HCT116 (cell line): ENCODE measurements at regions of chr1 and their contacts with region 1.

Region 1: DNA sequence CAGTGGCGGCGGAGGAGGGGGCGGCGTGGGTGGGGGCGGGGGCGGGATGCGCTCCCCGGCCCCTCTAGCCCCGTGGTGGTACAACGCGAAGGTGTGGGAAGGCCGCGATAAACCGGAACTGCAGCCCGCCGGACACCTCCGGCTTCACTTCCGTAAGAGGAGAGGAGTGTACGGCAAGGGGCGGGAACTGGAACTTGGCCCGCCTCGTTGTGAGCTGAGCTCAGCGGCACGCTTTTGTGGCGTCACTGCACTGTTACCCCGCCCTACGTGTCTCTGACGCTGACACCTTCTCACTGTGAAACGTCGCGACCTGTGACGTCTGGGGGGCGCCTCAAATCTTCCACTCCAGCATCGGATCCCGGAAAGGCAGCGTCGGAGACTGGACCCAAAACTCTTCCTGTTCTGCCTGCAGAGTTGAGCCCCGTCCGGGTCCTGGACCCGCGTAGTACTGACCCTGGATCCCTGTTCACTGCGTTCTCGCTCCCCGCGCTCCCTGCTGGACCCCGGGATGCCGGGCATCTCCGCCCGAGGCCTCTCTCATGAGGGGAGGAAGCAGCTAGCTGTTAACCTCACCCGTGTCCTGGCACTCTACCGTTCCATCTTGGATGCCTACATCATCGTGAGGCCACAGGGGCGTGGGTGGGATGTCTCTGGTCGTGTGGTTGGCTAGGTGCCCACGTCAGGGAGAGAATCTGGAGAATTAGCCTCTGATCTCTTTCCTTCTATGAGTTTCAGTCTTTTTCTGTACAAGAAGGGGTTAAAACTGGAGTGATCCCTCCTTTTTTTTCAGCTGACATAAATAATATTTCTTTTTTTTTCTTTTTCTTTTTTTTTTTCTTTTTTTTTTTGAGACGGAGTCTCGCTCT is at the start of gene ISG20L2:
- DNase-seq: peak; percentile 97
- ATAC-seq: peak; percentile 85
- H3K4me3 ChIP-seq: peak within 1 kb of the TSS; percentile 92 to 93
- H3K27ac ChIP-seq: peak within 1 kb of the TSS; percentile 81
- H3K4me1 ChIP-seq: peaks cover 24 to 34% of the 10 kb centered on the region in 2 experiments
- H3K27me3 ChIP-seq: no peaks in the 10 kb centered on the region
- CTCF ChIP-seq: no peak
- POLR2A ChIP-seq: no peak
- RAD21 ChIP-seq: no peak
- total RNA-seq, gene ISG20L2: 41.7 TPM

Region 2: GRCh38 chr1:156659994-156660751 is 68.7 kb before region 1 on chr1:
- CTCF ChIA-PET with region 1: interaction called, 28 read pairs
- POLR2A ChIA-PET with region 1: interaction called, 9 read pairs
- RAD21 ChIA-PET with region 1: no interaction called
- intact Hi-C with region 1: loop called (anchors 1 kb)
- DNase-seq: peak; percentile 94
- ATAC-seq: peak; percentile 74
- H3K4me3 ChIP-seq: peak overlapping the region; percentile 69 to 90
- H3K27ac ChIP-seq: peak overlapping the region; percentile 99
- H3K4me1 ChIP-seq: peaks cover 46 to 77% of the 10 kb centered on the region in 2 experiments
- H3K27me3 ChIP-seq: no peaks in the 10 kb centered on the region
- CTCF ChIP-seq: peak in 2 of 3 experiments; percentile 99; a peak in 4 of 6 replicates
- POLR2A ChIP-seq: peak; percentile 76
- RAD21 ChIP-seq: no peak

Region 3: DNA sequence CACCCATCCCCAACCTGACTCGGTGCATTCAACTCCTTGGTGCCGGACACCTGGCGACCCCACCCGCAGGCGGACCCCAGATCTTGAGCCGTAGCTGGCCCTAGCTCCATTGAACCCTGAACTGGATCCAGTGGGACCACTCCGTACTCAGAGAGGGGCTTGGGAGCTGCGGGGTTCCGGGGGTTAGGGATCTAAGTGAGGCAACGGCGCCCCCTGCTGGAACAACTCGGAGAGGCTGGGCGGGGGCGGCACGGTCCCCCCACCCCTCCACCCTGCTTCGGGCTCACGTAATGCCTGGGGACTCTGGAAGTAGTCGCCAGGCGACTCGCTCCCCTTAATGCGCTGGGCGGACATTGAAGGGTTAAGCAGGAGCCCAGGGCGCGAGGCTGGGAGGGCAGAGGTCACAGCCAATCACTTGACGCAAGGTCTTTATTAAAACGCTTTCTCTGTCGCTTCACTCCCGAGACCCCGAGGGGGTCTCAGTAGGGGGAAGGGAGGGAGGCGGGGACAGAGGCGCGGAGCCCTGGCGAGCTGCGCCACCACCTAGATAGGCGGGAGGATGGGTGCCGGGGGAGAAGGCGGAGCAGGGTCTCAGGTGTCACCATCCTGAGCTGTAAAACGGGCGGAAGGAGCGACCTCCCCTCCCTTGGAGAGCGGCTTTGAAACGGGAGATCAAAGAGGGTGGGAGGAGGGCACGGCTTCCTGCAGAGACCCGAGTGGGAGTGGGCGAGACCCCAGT is 22.7 kb before region 1 on chr1:
- CTCF ChIA-PET with region 1: interaction called, 59 read pairs
- POLR2A ChIA-PET with region 1: interaction called, 22 read pairs
- RAD21 ChIA-PET with region 1: interaction called, 13 read pairs
- intact Hi-C with region 1: no loop called
- DNase-seq: no peak
- ATAC-seq: peak; percentile 61
- H3K4me3 ChIP-seq: peak overlapping the region; percentile 62 to 63
- H3K27ac ChIP-seq: peak overlapping the region; percentile 89
- H3K4me1 ChIP-seq: peaks cover 72 to 87% of the 10 kb centered on the region in 2 experiments
- H3K27me3 ChIP-seq: no peaks in the 10 kb centered on the region
- CTCF ChIP-seq: peak in 2 of 3 experiments; percentile 80 to 92; a peak in 4 of 6 replicates
- POLR2A ChIP-seq: peak; percentile 24
- RAD21 ChIP-seq: no peak

Region 4: DNA sequence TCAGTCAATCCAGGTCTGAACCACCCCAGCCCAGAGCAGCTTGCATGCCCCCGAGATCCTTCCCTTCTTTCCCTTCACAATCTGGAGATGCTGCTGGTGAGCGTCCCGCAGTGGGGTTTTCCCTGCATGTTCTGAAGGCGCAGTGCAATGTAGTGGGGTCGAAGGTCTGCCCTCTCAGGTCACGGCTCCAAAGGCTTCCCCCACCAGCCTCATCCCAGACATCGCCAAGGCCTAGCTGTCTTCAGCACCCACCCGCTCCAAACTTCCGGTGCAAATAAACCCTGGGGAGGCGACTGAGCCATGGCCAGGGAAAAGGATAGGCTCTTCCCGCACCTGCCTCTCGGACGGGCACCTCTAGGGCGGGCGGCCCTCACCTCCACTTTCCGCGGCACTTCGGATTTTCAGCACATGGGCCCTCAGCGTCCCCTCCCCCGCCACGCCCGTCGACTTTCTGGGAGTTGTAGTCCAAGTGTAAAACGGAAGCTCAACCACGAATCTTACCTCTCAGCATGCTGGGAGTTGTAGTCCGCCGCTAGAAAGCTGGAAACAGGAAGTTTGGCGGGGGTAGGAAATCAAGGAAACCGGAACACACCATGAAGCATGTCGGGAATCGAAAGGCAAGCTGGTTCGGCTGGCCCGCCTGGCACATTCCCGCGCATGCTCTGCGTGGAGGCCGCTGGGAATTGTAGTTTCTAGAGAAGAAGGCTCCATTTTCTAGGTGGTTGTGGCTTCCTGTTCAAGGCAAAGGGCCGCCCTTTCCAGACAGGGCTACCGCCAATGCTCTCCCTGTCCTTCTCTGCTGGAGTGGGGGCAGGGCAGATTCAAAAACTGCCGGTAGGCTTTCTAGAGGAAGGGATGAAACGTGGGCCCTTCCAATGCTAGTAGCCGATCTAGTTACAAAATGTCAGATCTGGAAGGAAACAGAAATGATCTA is 12.1 kb after region 1 on chr1 and contains the start of gene MRPL24:
- CTCF ChIA-PET with region 1: interaction called, 21 read pairs
- POLR2A ChIA-PET with region 1: interaction called, 28 read pairs
- RAD21 ChIA-PET with region 1: interaction called, 4 to 5 read pairs
- intact Hi-C with region 1: loop called (anchors 1 kb)
- DNase-seq: peak; percentile 100
- ATAC-seq: peak; percentile 88
- H3K4me3 ChIP-seq: peak within 1 kb of the TSS; percentile 67 to 80
- H3K27ac ChIP-seq: peak within 1 kb of the TSS; percentile 84
- H3K4me1 ChIP-seq: peaks cover 14 to 29% of the 10 kb centered on the region in 2 experiments
- H3K27me3 ChIP-seq: no peaks in the 10 kb centered on the region
- CTCF ChIP-seq: no peak
- POLR2A ChIP-seq: peak; percentile 64
- RAD21 ChIP-seq: no peak
- total RNA-seq, gene MRPL24: 111 TPM

Region 5: DNA sequence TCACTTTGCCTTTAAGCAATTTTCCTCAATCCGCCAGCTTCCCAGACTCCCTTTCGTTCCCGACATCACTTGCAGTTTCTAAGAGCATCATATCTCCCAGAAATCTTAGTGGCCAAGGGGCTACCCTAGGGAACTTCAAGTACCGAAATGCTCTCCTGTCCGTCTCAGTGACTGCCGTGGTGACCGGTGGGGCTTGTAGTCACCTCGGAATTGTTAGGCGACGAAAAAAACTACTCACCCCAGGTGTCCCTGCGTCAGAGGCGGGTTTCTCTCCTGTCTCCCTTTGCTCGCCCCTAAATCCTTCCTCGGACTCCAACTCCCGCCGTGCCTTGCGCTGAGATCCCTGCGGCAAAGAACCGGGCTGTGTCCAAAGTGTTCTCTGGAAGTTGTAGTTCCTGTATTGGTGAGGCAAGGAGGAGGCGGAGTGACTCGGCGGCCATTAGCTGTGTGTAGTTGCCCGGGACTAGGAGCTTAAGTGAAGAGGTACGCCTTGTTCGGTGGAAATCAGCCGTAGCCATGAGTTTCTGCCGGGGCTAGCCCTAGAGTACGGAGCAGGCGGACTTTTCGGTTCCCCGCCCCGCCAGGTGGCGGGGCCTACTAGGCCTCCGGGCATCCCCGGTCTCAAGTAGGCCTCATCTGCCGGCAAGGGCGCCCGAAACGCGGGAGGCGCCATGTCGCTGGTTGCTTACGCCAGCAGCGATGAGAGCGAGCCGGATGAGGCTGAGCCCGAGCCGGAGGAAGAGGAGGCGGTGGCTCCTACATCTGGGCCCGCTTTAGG is 38.5 kb after region 1 on chr1 and contains the start of gene PRCC:
- CTCF ChIA-PET with region 1: interaction called, 51 read pairs
- POLR2A ChIA-PET with region 1: interaction called, 9 read pairs
- RAD21 ChIA-PET with region 1: interaction called in 1 of 2 experiments, 4 read pairs
- intact Hi-C with region 1: loop called (anchors 1 kb)
- DNase-seq: peak; percentile 99
- ATAC-seq: peak; percentile 92
- H3K4me3 ChIP-seq: peak within 1 kb of the TSS; percentile 74 to 95
- H3K27ac ChIP-seq: peak within 1 kb of the TSS; percentile 85
- H3K4me1 ChIP-seq: peaks cover 13 to 19% of the 10 kb centered on the region in 2 experiments
- H3K27me3 ChIP-seq: no peaks in the 10 kb centered on the region
- CTCF ChIP-seq: no peak
- POLR2A ChIP-seq: peak; percentile 47
- RAD21 ChIP-seq: peak; percentile 34; the same call in 1 of the 2 replicates
- total RNA-seq, gene PRCC: 78.1 TPM

Region 6: GRCh38 chr1:156927215-156928042 is 198.6 kb after region 1 on chr1:
- CTCF ChIA-PET with region 1: interaction called, 13 read pairs
- POLR2A ChIA-PET with region 1: no interaction called
- RAD21 ChIA-PET with region 1: interaction called in 1 of 2 experiments, 4 read pairs
- intact Hi-C with region 1: loop called (anchors 1 kb)
- DNase-seq: peak; percentile 66
- ATAC-seq: peak; percentile 89
- H3K4me3 ChIP-seq: peak overlapping the region; percentile 38 to 59
- H3K27ac ChIP-seq: peak overlapping the region; percentile 12; the same call in 1 of the 2 replicates
- H3K4me1 ChIP-seq: peaks cover 20 to 31% of the 10 kb centered on the region in 2 experiments
- H3K27me3 ChIP-seq: peaks cover 6% of the 10 kb centered on the region; the same call in 1 of the 2 replicates
- CTCF ChIP-seq: peak; percentile 81 to 93 (median 81)
- POLR2A ChIP-seq: no peak
- RAD21 ChIP-seq: peak; percentile 97